ENCODE measurements at regions of chr5 and their contacts with region 1.

Region 1: DNA sequence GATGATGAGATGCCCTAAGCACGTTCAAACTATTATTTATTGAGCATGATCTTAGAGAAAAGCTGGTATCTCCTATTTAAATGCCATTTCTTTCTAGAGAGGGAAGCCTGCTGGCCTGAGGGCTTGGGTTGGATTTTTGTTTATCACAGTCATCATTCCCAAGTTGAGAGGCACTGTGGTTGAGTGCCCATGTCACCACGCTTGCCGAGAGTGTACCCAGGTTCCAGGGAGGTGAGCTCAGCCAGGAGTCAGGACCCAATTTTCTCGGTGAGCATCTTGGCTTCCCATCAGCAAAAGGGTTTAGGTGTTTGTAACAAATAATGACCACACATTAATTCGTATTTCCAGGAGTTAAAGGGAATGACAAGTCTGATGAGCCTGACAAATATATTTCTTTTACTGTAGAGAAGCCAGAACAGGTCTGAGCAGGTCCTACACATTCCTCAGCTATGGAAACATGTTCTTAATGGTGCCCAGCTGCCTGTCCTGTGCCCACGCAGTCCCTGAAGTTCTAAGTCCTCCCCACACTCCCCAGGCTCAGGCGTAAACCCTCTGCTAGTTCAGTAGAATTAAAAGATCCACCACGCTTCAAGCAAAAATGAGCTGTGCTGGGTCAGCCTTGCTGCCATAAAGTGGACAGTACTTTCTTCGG is 258.9 kb upstream of the IRX2 start:
- DNase-seq: peak; percentile 71
- H3K4me3 ChIP-seq: no peak overlapping the region
- H3K27ac ChIP-seq: peak overlapping the region; percentile 51
- H3K4me1 ChIP-seq: peaks cover 17% of the 10 kb centered on the region
- H3K27me3 ChIP-seq: no peaks in the 10 kb centered on the region
- CTCF ChIP-seq: no peak

Region 2: DNA sequence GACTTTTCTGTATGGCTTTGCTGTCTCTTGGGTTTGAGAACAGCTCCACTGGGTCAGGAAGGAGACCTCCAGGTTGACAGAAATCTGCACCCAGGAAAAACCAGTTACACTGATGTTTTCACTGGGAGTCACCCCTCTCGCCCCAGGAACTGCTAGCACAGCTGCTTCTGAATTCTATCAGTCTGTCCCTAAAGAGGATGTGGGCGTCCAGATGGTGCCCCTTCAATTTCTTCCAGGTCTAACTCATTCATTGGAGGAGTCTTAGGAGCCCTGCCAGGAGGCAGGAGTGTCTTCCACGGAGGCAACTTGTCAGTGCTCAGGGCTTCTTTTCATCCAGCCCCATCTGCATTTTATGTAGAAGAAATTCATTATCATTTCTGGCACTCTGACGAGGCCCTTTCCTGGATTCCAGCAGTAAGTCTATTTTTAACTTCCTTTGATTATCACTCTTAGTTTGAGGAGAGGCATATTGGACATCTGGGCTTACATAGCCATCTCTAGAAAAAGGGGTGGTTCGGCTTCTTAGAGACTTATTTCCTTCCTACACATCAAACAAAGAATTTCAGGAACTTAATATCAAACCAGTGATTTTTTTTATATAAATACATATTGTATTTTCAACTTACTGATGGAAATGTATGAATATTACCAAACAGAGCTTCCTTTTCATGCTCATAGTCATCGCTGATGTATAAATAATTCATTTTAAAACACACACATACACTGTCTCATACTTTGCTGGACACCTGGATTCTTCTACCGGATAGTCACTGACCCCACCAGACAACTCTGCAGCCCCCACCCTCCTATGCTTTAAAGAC is 407.8 kb before region 1 on chr5:
- CTCF ChIA-PET with region 1: no interaction called
- dilution Hi-C with region 1: no loop called
- in situ Hi-C with region 1: no loop called
- intact Hi-C with region 1: no loop called
- DNase-seq: no peak
- H3K4me3 ChIP-seq: no peak overlapping the region
- H3K27ac ChIP-seq: no peak overlapping the region
- H3K4me1 ChIP-seq: no peaks in the 10 kb centered on the region
- H3K27me3 ChIP-seq: no peaks in the 10 kb centered on the region
- CTCF ChIP-seq: no peak

Region 3: GRCh38 chr5:2848651-2849050 is 161.8 kb before region 1 on chr5:
- CTCF ChIA-PET with region 1: no interaction called
- dilution Hi-C with region 1: no loop called
- in situ Hi-C with region 1: no loop called
- intact Hi-C with region 1: loop called (anchors 5 kb)
- DNase-seq: peak; percentile 5
- H3K4me3 ChIP-seq: no peak overlapping the region
- H3K27ac ChIP-seq: no peak overlapping the region
- H3K4me1 ChIP-seq: peaks cover 5% of the 10 kb centered on the region
- H3K27me3 ChIP-seq: no peaks in the 10 kb centered on the region
- CTCF ChIP-seq: peak; percentile 20 to 54

Region 4: DNA sequence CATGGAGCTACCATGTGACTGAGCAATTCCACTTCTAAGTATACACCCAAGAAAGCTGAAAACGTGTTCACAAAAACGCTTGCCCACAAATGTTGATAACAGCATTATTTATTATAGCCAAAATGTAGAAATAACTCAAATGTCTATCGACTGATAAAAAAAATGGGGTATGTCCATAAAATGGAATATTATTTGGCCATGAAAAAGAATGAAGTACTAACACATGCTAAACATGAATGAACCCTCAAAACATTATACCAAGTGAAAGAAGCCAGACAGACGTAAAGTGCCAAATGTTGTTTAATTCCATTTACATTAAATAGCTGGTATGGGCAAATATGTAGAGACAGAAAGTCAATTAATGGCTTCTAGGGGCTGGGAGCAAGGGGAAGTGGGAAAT is 74.0 kb before region 1 on chr5:
- CTCF ChIA-PET with region 1: no interaction called
- dilution Hi-C with region 1: no loop called
- in situ Hi-C with region 1: no loop called
- intact Hi-C with region 1: no loop called
- DNase-seq: no peak
- H3K4me3 ChIP-seq: no peak overlapping the region
- H3K27ac ChIP-seq: no peak overlapping the region
- H3K4me1 ChIP-seq: no peaks in the 10 kb centered on the region
- H3K27me3 ChIP-seq: no peaks in the 10 kb centered on the region
- CTCF ChIP-seq: no peak

Region 5: GRCh38 chr5:3033033-3033755 is 22.8 kb after region 1 on chr5:
- CTCF ChIA-PET with region 1: no interaction called
- dilution Hi-C with region 1: no loop called
- in situ Hi-C with region 1: no loop called
- intact Hi-C with region 1: no loop called
- DNase-seq: no peak
- H3K4me3 ChIP-seq: no peak overlapping the region
- H3K27ac ChIP-seq: no peak overlapping the region
- H3K4me1 ChIP-seq: no peaks in the 10 kb centered on the region
- H3K27me3 ChIP-seq: no peaks in the 10 kb centered on the region
- CTCF ChIP-seq: no peak

Region 6: DNA sequence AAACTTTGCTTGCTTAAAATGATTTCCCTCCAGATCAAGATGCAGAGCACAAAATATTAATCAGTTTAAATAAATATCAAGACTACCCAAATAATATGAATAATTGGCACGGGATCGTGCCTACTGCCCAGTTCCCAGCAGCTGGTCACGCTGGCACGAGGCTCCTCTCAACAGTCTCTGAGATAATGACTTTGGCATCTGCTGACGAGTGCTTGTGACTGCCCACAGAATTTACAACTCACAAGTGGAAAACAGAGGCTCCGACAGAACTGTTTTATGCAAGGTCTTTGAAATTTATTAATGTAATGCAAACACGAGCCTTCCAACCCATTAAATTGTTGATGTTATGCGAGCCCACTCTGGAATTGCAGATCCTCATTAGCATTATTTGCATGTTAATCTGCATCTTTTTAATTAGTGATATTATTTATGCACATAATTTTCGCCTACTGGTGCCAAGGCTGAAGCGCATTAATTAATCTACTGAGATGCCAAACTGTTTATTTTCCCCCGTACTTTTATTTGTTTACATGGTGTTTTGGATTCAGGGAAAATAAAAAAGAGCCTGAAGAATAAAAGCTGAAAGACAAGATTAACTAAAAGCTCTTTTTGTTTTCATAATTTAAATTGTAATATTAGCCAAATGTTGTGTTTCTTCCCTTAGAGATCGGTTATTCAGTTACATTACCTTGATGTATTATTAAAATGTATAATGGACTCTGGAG is 215.9 kb after region 1 on chr5:
- CTCF ChIA-PET with region 1: no interaction called
- dilution Hi-C with region 1: no loop called
- in situ Hi-C with region 1: no loop called
- intact Hi-C with region 1: no loop called
- DNase-seq: no peak
- H3K4me3 ChIP-seq: no peak overlapping the region
- H3K27ac ChIP-seq: no peak overlapping the region
- H3K4me1 ChIP-seq: no peaks in the 10 kb centered on the region
- H3K27me3 ChIP-seq: no peaks in the 10 kb centered on the region
- CTCF ChIP-seq: no peak